Adrenal gland (tissue), 19 donors: ENCODE measurements at regions of chr14 and their contacts with region 1.

Region 1: DNA sequence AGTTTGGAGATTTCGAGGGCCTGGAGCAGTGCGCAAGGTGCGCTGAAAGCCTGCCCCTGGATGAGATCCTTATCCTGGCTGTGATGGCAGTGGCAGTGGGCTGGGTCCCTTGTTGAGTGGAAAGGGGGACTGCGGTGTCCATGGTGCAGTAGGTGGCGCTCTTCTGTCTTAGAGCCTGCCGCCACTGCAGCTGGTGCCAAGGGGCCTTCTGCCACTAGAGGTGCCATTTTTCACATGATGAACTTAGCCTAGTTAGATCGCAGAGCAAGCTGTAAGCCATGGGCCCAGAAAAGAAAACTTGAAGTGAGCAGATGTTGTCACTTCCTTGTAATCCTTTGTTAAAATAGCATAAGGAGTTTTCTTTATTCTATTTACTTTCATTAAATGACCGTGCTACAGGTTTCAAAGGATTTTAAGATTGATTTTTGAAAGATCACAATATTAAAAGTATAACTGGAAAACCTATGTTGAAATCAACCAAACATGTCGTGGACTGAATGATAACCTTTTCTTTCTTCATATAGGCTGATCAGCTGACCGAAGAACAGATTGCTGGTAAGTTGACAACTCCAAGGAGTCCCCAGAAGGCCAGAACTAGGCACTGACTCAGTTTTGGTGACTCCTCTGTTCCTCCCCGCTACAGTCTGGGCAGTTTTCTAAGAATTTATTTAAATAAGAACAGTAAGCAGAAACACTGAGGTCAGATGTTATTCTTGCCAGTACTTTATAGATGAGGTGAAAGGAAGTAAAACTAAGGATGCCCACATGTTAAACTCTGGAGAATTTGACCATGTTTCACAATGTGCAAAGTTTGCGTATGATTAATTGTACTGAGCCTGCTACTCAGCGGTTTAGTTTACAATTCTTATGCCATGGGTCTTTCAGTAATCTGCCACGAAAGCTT is 3.0 kb downstream of the CALM1 start:
- DNase-seq: peak; percentile 86 to 98 (median 93)
- H3K4me3 ChIP-seq: peak overlapping the region in 1 of 4 donors; percentile 97
- H3K27ac ChIP-seq: peak overlapping the region in 3 of 5 donors; percentile 29 to 80 (median 30)
- H3K4me1 ChIP-seq: peaks cover 15 to 32% of the 10 kb centered on the region in 2 donors
- H3K27me3 ChIP-seq: no peaks in the 10 kb centered on the region
- CTCF ChIP-seq: peak; percentile 98 to 100 (median 99)
- POLR2A ChIP-seq: no peak

Region 2: GRCh38 chr14:90301668-90302090 is 98.1 kb before region 1 on chr14:
- intact Hi-C with region 1: loop called in 1 of 2 experiments (anchors 10 kb)
- DNase-seq: no peak
- H3K4me3 ChIP-seq: no peak overlapping the region
- H3K27ac ChIP-seq: peak overlapping the region in 2 of 5 donors; percentile 18 to 40
- H3K4me1 ChIP-seq: peaks cover 7 to 20% of the 10 kb centered on the region in 2 donors
- H3K27me3 ChIP-seq: no peaks in the 10 kb centered on the region
- CTCF ChIP-seq: peak; percentile 21 to 64 (median 47)
- POLR2A ChIP-seq: no peak

Region 3: DNA sequence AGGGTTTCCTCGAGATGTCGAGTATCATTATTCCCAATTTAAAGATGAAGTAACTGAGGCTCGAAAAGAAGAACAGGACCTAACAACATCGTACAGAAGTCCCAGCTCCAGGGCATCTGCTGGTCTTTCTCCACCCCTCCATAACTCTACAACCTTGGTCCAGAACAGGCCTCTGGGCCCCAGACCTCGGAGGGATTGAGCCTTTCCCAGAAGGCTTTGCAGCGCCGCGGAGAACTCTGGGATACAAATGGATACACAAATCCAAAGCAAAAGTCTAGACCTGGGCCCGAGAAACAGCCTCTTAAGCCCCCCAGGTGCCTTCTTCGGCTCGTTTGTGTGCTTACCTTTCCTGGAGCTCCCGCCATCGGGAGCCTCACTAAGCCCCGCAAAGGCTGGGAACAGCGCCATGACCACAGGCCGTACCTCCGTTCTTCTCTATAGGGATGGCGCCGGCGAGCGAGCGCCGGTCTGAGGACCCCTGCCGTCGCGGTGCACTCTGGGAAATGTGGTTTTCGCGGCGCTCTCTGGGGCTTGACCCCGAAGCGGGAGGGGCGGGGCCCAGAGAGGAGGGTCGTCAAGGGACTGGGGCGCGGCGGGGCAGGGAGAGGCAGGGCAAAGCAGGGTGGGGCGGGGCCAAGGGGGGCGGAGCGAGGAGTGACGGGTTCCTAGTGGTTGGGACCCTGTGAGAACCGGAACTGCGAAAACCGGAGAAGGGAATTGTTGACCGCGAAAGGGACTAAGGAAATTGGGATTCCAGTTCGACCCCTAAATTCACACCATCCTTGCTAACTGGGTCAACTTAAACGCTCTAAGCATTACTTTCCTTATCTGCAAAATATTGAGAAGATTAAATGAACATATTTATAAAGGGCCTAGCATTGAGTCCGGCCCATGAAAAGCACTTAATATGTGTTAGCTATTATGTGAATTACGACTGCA is 68.0 kb before region 1 on chr14 and contains the start of gene NRDE2:
- intact Hi-C with region 1: no loop called
- DNase-seq: peak; percentile 98 to 100 (median 100)
- H3K4me3 ChIP-seq: peak within 1 kb of the TSS; percentile 55 to 78 (median 70)
- H3K27ac ChIP-seq: peak within 1 kb of the TSS in 4 of 5 donors; percentile 48 to 86 (median 64)
- H3K4me1 ChIP-seq: peaks cover 8 to 13% of the 10 kb centered on the region in 2 donors
- H3K27me3 ChIP-seq: no peaks in the 10 kb centered on the region
- CTCF ChIP-seq: no peak
- POLR2A ChIP-seq: peak; percentile 62 to 65
- total RNA-seq, gene NRDE2: 9.2 to 24.8 (median 19.4) TPM

Region 4: GRCh38 chr14:90697577-90698206 is 297.9 kb after region 1 on chr14:
- intact Hi-C with region 1: loop called (anchors 5 to 10 kb)
- DNase-seq: peak; percentile 82 to 95 (median 86)
- H3K4me3 ChIP-seq: no peak overlapping the region
- H3K27ac ChIP-seq: peak overlapping the region in 1 of 5 donors; percentile 64
- H3K4me1 ChIP-seq: peaks cover 3 to 17% of the 10 kb centered on the region in 2 donors
- H3K27me3 ChIP-seq: no peaks in the 10 kb centered on the region
- CTCF ChIP-seq: peak; percentile 93 to 98 (median 96)
- POLR2A ChIP-seq: no peak

Region 5: DNA sequence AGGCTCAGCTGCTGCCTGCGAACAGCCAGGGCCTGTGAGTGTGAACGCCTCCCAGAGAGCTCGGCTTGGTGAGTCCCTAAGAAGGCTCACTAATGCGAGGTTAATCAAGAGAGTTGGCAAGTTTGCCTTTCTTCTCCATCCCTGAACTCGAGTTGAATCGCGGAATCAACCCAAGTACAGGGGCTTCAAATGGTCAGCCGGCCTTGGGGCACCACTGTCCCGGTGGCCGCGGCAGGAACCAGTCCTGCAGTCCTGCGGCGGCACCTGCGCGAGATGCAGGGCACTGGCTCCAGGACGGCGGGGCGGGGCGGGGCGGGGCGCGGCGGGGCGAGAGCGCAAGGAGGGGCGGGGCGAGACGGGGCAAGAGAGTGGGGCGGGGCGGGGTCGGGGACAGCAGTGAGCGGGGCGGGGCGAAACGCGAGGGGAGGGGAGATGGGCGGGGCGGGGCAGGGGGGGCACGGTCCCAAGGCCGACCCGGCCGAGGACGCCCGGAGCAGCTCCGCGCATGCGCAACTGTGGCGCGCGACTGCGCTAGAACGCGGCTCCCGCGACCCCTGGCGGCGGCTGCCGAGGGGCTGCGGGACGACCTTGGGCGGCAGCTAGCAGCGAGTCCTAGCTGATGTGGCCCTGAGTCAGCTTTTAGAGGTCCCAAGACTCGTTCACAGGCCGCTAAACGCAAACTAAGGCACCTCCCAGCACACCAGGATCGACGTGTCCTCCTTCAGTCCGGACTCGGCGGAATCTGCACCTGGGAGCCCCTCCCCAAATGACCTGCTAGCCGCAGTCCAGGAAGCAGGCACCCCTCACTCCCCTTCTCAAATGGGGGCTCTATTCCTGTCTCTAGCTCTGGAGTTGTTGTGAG is 358.5 kb after region 1 on chr14:
- intact Hi-C with region 1: loop called in 1 of 2 experiments (anchors 5 kb)
- DNase-seq: peak; percentile 89 to 94 (median 93)
- H3K4me3 ChIP-seq: peak overlapping the region in 2 of 4 donors; percentile 22 to 66
- H3K27ac ChIP-seq: peak overlapping the region in 4 of 5 donors; percentile 26 to 90 (median 80)
- H3K4me1 ChIP-seq: peaks cover 9 to 13% of the 10 kb centered on the region in 2 donors
- H3K27me3 ChIP-seq: no peaks in the 10 kb centered on the region
- CTCF ChIP-seq: peak; percentile 57 to 95 (median 83)
- POLR2A ChIP-seq: peak; percentile 49 to 55